ENCODE measurements at regions of chr4 and their contacts with region 1.

Region 1: GRCh38 chr4:30847167-30847566 is 127.0 kb downstream of the PCDH7 start:
- DNase-seq: no peak
- ATAC-seq: no peak
- H3K4me3 ChIP-seq: no peak overlapping the region
- H3K27ac ChIP-seq: no peak overlapping the region
- H3K4me1 ChIP-seq: peaks cover 0 to 5% of the 10 kb centered on the region in 2 donors
- H3K27me3 ChIP-seq: no peaks in the 10 kb centered on the region

Region 2: DNA sequence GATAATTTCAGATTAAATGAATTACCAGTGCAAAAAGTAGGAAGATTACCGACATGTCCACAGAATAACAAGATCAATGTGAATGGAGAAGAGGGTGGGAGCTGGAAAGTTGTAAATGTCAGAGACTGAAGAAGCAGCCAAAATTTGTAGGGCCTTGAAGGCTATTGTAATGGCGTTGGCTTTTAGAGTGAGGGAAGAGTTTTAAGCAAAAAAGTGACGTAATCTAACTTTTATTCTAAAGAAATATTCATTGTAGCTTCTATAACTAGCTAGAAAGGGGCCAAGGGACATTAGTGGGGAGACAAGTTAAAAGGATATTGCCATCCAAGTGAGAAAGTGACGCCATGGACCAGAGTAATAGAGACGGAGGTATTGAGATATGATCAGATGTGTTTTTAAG is 190.3 kb before region 1 on chr4:
- intact Hi-C with region 1: no loop called
- DNase-seq: no peak
- ATAC-seq: no peak
- H3K4me3 ChIP-seq: no peak overlapping the region
- H3K27ac ChIP-seq: no peak overlapping the region
- H3K4me1 ChIP-seq: no peaks in the 10 kb centered on the region
- H3K27me3 ChIP-seq: no peaks in the 10 kb centered on the region

Region 3: GRCh38 chr4:30726090-30726675 is 121.0 kb before region 1 on chr4:
- intact Hi-C with region 1: loop called in 1 of 2 experiments (anchors 5 kb)
- DNase-seq: no peak
- ATAC-seq: no peak
- H3K4me3 ChIP-seq: peak overlapping the region; percentile 86 to 90
- H3K27ac ChIP-seq: no peak overlapping the region
- H3K4me1 ChIP-seq: peaks cover 0 to 2% of the 10 kb centered on the region in 2 donors
- H3K27me3 ChIP-seq: no peaks in the 10 kb centered on the region

Region 4: GRCh38 chr4:30903502-30904217 is 56.5 kb after region 1 on chr4:
- intact Hi-C with region 1: loop called in 1 of 2 experiments (anchors 2 kb)
- DNase-seq: no peak
- ATAC-seq: no peak
- H3K4me3 ChIP-seq: no peak overlapping the region
- H3K27ac ChIP-seq: no peak overlapping the region
- H3K4me1 ChIP-seq: peaks cover 0 to 13% of the 10 kb centered on the region in 2 donors
- H3K27me3 ChIP-seq: no peaks in the 10 kb centered on the region

Region 5: GRCh38 chr4:30916337-30917274 is 69.4 kb after region 1 on chr4:
- intact Hi-C with region 1: no loop called
- DNase-seq: no peak
- ATAC-seq: no peak
- H3K4me3 ChIP-seq: no peak overlapping the region
- H3K27ac ChIP-seq: no peak overlapping the region
- H3K4me1 ChIP-seq: peaks cover 2 to 3% of the 10 kb centered on the region in 2 donors
- H3K27me3 ChIP-seq: no peaks in the 10 kb centered on the region